ENCODE measurements at regions of chr15 and their contacts with region 1.

Region 1: DNA sequence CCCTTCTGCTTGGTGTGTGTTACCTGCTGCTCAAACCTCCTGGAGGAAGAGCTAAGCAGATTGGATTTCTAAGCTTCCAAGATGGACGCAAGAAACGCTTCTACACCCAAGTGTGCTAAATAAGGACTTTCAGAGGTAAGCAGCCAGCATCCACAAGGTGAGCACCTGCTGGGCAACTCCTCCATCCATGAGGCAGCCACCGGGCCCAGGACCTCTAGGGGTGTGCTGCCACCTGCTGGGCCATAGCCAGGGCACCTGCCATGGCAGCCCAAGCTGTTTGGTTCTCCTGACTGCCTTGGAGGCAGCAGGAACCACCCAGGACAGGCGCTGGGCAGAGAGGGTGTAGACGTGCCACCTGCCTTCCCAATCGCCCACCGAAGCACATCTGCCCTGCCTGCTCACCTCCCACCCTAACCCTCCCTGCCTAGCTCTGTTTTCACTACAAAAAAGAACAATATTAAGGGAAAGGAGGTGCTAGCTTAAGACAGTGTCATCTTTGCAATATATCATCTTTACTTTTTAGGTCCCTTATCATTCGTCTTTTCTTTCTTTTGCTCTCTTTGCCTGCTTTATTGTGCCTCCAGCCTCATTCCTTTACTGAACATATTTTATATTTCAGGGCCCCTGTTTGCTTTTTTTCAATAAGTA is 12.9 kb downstream of the C15orf62 start:
- H3K4me3 ChIP-seq: no peak overlapping the region
- H3K27ac ChIP-seq: no peak overlapping the region
- H3K4me1 ChIP-seq: peaks cover 6% of the 10 kb centered on the region
- CTCF ChIP-seq: peak; percentile 87

Region 2: GRCh38 chr15:40743921-40744814 is 38.5 kb before region 1 on chr15:
- CTCF ChIA-PET with region 1: interaction called, 16 read pairs
- POLR2A ChIA-PET with region 1: no interaction called
- H3K4me3 ChIP-seq: no peak overlapping the region
- H3K27ac ChIP-seq: no peak overlapping the region
- H3K4me1 ChIP-seq: no peaks in the 10 kb centered on the region
- CTCF ChIP-seq: no peak

Region 3: DNA sequence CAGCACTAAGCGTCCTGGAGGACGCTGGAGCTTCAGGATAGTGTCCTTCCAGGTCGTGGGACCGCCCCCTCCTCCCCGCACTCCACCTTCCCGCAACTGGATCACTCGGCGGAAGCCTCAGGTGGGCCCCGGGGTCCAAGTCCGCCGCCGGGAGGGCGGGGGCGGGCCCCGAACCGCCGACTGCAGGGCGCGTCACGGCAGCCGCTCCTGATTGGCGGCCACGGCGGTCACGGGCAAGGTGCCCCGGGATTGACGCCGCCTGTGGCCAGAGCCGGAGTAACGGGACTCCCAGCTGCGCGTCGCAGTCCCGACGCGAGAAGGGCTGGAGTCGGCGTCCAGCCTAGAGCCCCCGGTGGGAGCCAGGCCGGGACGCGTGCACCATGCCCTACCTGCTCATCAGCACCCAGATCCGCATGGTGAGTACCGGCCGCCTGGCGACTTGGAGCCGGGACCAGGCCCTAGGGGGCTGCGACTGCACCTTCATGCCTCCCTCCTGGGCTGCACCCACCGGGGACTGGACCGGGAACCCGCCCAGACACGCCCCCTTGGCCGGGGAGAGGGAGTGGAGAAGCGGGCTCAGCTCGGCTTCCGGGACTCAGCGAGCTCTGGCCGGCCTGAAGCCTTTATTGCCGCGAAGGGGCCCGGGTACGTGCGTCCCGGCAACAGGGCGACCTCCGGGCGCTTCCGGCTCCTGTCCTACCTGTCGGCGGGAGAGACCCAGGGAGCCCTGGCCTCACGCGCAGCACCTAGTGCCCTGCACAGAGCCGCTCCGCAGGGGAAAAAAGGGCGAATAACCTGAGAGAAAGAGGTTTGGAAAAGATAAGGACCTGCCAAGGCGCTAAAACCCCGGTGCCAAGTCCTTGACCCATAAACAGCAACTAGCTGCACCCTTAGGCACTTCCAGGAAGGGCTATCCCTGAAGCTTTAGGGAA is 18.6 kb before region 1 on chr15 and contains the start of gene GCHFR:
- CTCF ChIA-PET with region 1: interaction called, 18 read pairs
- POLR2A ChIA-PET with region 1: interaction called, 5 read pairs
- H3K4me3 ChIP-seq: peak within 1 kb of the TSS; percentile 33
- H3K27ac ChIP-seq: peak within 1 kb of the TSS; percentile 87
- H3K4me1 ChIP-seq: peaks cover 19% of the 10 kb centered on the region
- CTCF ChIP-seq: peak; percentile 72

Region 4: DNA sequence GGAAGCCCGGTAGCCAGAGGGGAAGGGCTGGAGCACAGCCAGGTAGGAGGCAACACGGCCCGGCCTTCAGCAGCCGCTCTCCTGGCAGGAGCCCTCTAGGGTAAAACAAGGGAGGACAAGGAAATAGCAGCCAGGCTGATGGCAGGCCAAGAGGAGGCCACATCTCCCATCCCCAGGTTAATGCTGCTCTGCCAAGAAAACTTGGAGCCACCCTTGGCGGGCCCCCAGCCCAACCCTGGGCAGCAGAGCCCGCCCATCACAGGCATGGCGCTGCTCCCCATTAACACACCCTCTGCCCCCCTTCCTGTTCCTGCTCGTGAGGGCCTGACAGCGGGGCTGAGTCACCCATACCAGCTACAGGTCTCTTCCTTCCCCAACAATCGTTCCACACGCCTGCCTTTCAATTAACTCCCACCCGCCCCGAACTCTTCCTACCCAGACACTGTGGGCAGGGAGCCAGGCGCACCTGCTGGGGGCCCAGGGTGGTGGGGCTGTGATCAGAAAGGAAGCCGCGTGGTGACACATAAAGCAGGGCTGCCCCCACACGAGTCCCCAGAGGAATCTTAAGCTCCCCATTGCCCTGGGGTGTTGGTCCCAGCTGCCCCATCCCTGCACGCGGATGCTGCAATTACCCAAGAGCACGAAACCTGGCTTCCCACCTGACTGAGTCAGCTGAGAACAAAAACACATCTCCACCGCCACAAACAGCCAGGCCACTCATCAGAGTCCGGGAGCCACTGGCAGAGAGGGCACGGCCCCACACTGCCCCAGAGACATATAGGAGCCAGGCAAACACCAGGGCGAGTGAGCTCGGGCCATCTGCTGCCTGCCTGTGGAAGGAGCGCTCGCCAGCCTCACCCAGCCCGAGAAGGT is 13.2 kb before region 1 on chr15 and contains the start of gene C15orf62:
- CTCF ChIA-PET with region 1: interaction called, 18 read pairs
- POLR2A ChIA-PET with region 1: no interaction called
- H3K4me3 ChIP-seq: no peak within 1 kb of the TSS
- H3K27ac ChIP-seq: peak within 1 kb of the TSS; percentile 58
- H3K4me1 ChIP-seq: peaks cover 25% of the 10 kb centered on the region
- CTCF ChIP-seq: no peak

Region 5: GRCh38 chr15:40850576-40851112 is 67.9 kb after region 1 on chr15:
- CTCF ChIA-PET with region 1: no interaction called
- POLR2A ChIA-PET with region 1: no interaction called
- H3K4me3 ChIP-seq: no peak overlapping the region
- H3K27ac ChIP-seq: no peak overlapping the region
- H3K4me1 ChIP-seq: peaks cover 3% of the 10 kb centered on the region; the same call in 1 of the 2 replicates
- CTCF ChIP-seq: no peak

Measured in HEK293 (cell line).